ENCODE measurements at regions of chr18 and their contacts with region 1.

Region 1: DNA sequence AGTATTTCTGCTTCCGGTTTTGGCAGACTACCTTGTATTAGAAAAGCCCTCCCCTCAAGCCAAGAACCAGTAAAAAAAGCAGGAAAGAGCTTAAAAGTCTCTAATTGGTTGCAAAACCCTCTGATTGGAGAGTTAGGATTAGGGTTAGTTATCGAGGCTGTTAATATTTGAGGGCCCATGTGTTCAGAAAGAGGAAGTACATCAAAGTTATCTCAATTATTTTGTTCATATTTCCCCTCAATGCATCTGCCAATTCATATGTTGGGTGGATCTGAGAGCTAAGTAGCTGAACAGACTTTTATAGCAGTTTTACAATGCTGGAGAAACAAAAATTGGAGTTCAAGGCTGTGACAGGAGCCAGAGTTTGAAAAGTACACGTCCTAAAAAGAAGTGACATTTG is 43.1 kb upstream of the KLHL14 start:
- DNase-seq: no peak
- H3K4me3 Mint-ChIP-seq: no peak overlapping the region
- H3K27ac Mint-ChIP-seq: no peak overlapping the region
- H3K4me1 Mint-ChIP-seq: no peaks in the 10 kb centered on the region
- H3K27me3 Mint-ChIP-seq: no peaks in the 10 kb centered on the region

Region 2: GRCh38 chr18:32759611-32760167 is 56.2 kb before region 1 on chr18:
- intact Hi-C with region 1: loop called (anchors 10 kb)
- DNase-seq: no peak
- H3K4me3 Mint-ChIP-seq: no peak overlapping the region
- H3K27ac Mint-ChIP-seq: no peak overlapping the region
- H3K4me1 Mint-ChIP-seq: no peaks in the 10 kb centered on the region
- H3K27me3 Mint-ChIP-seq: peaks cover 2% of the 10 kb centered on the region

Measured in activated T-helper 2 cell treated with anti-CD3 and anti-CD28 coated beads, Interferon-gamma antibody, Interleukin-2, Interleukin-4, amounts not matched to agents 10 μg/mL and 5 μg/mL and 100 μg/mL, durations not matched to agents 14 hours and 24 hours and 36 hours (primary cell).